ENCODE measurements at regions of chr1 and their contacts with region 1.

Region 1: GRCh38 chr1:192445848-192446489 is 129.2 kb downstream of the RGS21 start:
- DNase-seq: no peak
- ATAC-seq: peak; percentile 54
- H3K4me3 ChIP-seq: no peak overlapping the region
- H3K27ac ChIP-seq: no peak overlapping the region
- H3K4me1 ChIP-seq: no peaks in the 10 kb centered on the region
- H3K27me3 ChIP-seq: no peaks in the 10 kb centered on the region
- CTCF ChIP-seq: peak; percentile 56 to 69 (median 65)
- EP300 ChIP-seq: no peak
- POLR2A ChIP-seq: no peak
- RAD21 ChIP-seq: peak; percentile 69

Region 2: DNA sequence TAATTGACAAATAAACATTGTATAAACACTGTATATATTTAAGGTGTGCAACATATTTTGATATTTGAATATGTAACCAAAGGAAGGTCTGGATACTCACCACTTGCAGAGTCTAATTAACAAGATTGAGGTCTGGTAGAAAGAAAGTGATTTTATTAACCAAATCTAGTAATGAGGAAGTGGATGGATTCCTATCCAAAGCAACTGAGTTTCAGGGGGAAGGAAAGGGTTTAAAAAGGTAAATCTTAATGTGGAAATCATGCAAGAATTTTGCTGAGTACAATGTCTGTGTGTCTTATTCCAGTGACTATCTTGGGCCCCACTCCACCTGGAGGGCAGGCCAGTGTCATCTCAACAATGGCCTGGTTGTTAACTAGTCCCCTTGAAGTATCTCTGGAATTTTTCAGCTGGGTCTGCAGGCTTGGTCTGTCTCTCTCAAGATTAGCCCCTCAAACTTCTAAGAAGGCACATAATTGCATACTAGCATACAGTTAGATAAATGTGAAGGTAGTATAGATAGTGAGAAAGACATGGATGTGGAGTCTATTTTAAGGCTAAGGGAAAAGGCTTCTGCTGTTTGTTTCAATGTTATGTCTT is 550.4 kb before region 1 on chr1:
- CTCF ChIA-PET with region 1: no interaction called
- POLR2A ChIA-PET with region 1: no interaction called
- RAD21 ChIA-PET with region 1: no interaction called
- SMC1A ChIA-PET with region 1: no interaction called
- in situ Hi-C with region 1: no loop called
- intact Hi-C with region 1: loop called (anchors 10 kb)
- DNase-seq: no peak
- ATAC-seq: no peak
- H3K4me3 ChIP-seq: no peak overlapping the region
- H3K27ac ChIP-seq: no peak overlapping the region
- H3K4me1 ChIP-seq: no peaks in the 10 kb centered on the region
- H3K27me3 ChIP-seq: no peaks in the 10 kb centered on the region
- CTCF ChIP-seq: no peak
- EP300 ChIP-seq: no peak
- POLR2A ChIP-seq: no peak
- RAD21 ChIP-seq: no peak

Region 3: DNA sequence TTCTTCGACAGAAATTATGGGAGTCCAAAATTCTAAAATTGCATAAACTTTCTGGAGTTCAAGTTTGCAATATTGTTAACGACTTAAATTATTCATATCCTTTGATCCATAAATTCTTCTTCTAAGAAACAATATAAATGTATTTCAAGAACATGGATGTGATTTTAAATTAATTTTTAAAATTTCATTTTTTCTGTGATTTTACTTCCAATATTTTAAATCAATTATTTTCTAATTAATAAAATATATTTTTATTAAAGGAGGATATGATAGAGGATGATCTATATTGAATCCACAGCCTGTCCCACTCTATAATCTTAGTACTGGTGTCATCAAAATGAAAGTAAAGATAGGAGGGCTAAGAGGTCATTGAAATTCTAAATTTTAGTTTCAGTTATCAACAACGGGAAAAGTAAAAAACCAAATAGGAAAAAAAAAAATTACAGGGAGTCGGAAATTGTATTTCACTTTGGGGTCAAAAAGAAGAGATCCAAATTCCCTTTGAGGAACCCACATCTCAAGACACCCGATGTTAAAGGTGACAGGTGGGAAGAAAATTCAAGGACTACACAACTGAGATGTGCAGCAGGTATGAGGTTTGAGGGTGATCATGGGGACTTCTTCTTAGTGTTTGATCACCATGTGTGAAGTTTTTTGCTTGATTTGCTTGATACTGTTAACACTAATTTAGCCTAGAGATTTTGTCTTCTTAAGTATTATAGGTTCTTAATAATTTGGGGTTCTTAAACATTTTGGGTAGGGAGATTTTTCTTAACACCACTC is 442.5 kb before region 1 on chr1:
- CTCF ChIA-PET with region 1: no interaction called
- POLR2A ChIA-PET with region 1: no interaction called
- RAD21 ChIA-PET with region 1: no interaction called
- SMC1A ChIA-PET with region 1: no interaction called
- in situ Hi-C with region 1: no loop called
- intact Hi-C with region 1: loop called (anchors 10 kb)
- DNase-seq: no peak
- ATAC-seq: no peak
- H3K4me3 ChIP-seq: no peak overlapping the region
- H3K27ac ChIP-seq: no peak overlapping the region
- H3K4me1 ChIP-seq: no peaks in the 10 kb centered on the region
- H3K27me3 ChIP-seq: no peaks in the 10 kb centered on the region
- CTCF ChIP-seq: no peak
- EP300 ChIP-seq: no peak
- POLR2A ChIP-seq: no peak
- RAD21 ChIP-seq: no peak

Region 4: GRCh38 chr1:192053531-192053971 is 392.4 kb before region 1 on chr1:
- CTCF ChIA-PET with region 1: no interaction called
- POLR2A ChIA-PET with region 1: no interaction called
- RAD21 ChIA-PET with region 1: no interaction called
- SMC1A ChIA-PET with region 1: no interaction called
- in situ Hi-C with region 1: no loop called
- intact Hi-C with region 1: loop called (anchors 10 kb)
- DNase-seq: no peak
- ATAC-seq: no peak
- H3K4me3 ChIP-seq: no peak overlapping the region
- H3K27ac ChIP-seq: no peak overlapping the region
- H3K4me1 ChIP-seq: no peaks in the 10 kb centered on the region
- H3K27me3 ChIP-seq: no peaks in the 10 kb centered on the region
- CTCF ChIP-seq: no peak
- EP300 ChIP-seq: no peak
- POLR2A ChIP-seq: no peak
- RAD21 ChIP-seq: no peak

Region 5: DNA sequence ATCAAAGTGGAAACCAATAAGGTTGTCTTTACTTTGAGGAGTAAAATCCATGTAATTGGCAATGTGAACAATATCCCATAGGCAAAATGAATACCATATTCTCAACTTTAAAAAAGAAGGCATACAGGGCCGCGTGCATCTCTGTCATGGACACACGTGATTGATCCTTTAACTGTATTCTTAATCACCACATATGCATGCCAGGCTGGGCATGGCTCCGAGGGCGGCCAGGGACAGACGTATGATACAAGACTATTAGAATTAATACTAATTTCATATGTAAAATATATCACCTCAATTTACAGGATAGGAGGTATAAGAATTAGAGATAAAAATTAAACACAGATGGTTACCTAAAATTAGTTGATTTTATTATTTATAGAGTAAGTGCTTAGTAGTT is 118.0 kb before region 1 on chr1:
- CTCF ChIA-PET with region 1: no interaction called
- POLR2A ChIA-PET with region 1: no interaction called
- RAD21 ChIA-PET with region 1: no interaction called
- SMC1A ChIA-PET with region 1: no interaction called
- in situ Hi-C with region 1: no loop called
- intact Hi-C with region 1: loop called (anchors 5 kb)
- DNase-seq: no peak
- ATAC-seq: no peak
- H3K4me3 ChIP-seq: no peak overlapping the region
- H3K27ac ChIP-seq: no peak overlapping the region
- H3K4me1 ChIP-seq: no peaks in the 10 kb centered on the region
- H3K27me3 ChIP-seq: no peaks in the 10 kb centered on the region
- CTCF ChIP-seq: no peak
- EP300 ChIP-seq: no peak
- POLR2A ChIP-seq: no peak
- RAD21 ChIP-seq: no peak